ENCODE measurements at regions of chr6 and their contacts with region 1.

Region 1: GRCh38 chr6:129370268-129370916 is 339.6 kb downstream of the ARHGAP18 start:
- DNase-seq: peak; percentile 9 to 43 (median 15)
- ATAC-seq: peak; percentile 58; the same call in 2 of the 3 replicates
- H3K4me3 ChIP-seq: no peak overlapping the region
- H3K27ac ChIP-seq: no peak overlapping the region
- H3K4me1 ChIP-seq: no peaks in the 10 kb centered on the region
- H3K27me3 ChIP-seq: no peaks in the 10 kb centered on the region
- CTCF ChIP-seq: peak; percentile 23 to 64 (median 60); a peak in 5 of 6 replicates
- EP300 ChIP-seq: no peak
- POLR2A ChIP-seq: no peak
- RAD21 ChIP-seq: peak; percentile 64 to 71

Region 2: GRCh38 chr6:127737009-127737486 is 1633.3 kb before region 1 on chr6:
- CTCF ChIA-PET with region 1: no interaction called
- POLR2A ChIA-PET with region 1: no interaction called
- in situ Hi-C with region 1: no loop called
- intact Hi-C with region 1: loop called (anchors 2 kb)
- DNase-seq: peak; percentile 12 to 41 (median 33)
- ATAC-seq: peak; percentile 61; the same call in 1 of the 3 replicates
- H3K4me3 ChIP-seq: no peak overlapping the region
- H3K27ac ChIP-seq: no peak overlapping the region
- H3K4me1 ChIP-seq: no peaks in the 10 kb centered on the region
- H3K27me3 ChIP-seq: no peaks in the 10 kb centered on the region
- CTCF ChIP-seq: peak in 2 of 3 experiments; percentile 36 to 52; a peak in 3 of 6 replicates
- EP300 ChIP-seq: no peak
- POLR2A ChIP-seq: no peak
- RAD21 ChIP-seq: peak; percentile 56 to 71

Region 3: GRCh38 chr6:128725271-128726233 is 644.8 kb before region 1 on chr6:
- CTCF ChIA-PET with region 1: no interaction called
- POLR2A ChIA-PET with region 1: no interaction called
- in situ Hi-C with region 1: no loop called
- intact Hi-C with region 1: loop called (anchors 2 kb)
- DNase-seq: peak; percentile 5 to 24 (median 18)
- ATAC-seq: no peak
- H3K4me3 ChIP-seq: no peak overlapping the region
- H3K27ac ChIP-seq: no peak overlapping the region
- H3K4me1 ChIP-seq: no peaks in the 10 kb centered on the region
- H3K27me3 ChIP-seq: no peaks in the 10 kb centered on the region
- CTCF ChIP-seq: peak in 2 of 3 experiments; percentile 30 to 35; a peak in 2 of 6 replicates
- EP300 ChIP-seq: no peak
- POLR2A ChIP-seq: no peak
- RAD21 ChIP-seq: peak; percentile 22 to 31; a peak in 3 of 4 replicates

Region 4: GRCh38 chr6:129353067-129353466 is 17.3 kb before region 1 on chr6:
- CTCF ChIA-PET with region 1: no interaction called
- POLR2A ChIA-PET with region 1: no interaction called
- in situ Hi-C with region 1: no loop called
- intact Hi-C with region 1: no loop called
- DNase-seq: no peak
- ATAC-seq: no peak
- H3K4me3 ChIP-seq: no peak overlapping the region
- H3K27ac ChIP-seq: no peak overlapping the region
- H3K4me1 ChIP-seq: no peaks in the 10 kb centered on the region
- H3K27me3 ChIP-seq: no peaks in the 10 kb centered on the region
- CTCF ChIP-seq: no peak
- EP300 ChIP-seq: no peak
- POLR2A ChIP-seq: no peak
- RAD21 ChIP-seq: no peak